Posterior vena cava (tissue), 2 donors: ENCODE measurements at regions of chr3 and their contacts with region 1.

Region 1: GRCh38 chr3:167728176-167728575 is 6.5 kb downstream of the PDCD10 start:
- DNase-seq: no peak

Region 2: DNA sequence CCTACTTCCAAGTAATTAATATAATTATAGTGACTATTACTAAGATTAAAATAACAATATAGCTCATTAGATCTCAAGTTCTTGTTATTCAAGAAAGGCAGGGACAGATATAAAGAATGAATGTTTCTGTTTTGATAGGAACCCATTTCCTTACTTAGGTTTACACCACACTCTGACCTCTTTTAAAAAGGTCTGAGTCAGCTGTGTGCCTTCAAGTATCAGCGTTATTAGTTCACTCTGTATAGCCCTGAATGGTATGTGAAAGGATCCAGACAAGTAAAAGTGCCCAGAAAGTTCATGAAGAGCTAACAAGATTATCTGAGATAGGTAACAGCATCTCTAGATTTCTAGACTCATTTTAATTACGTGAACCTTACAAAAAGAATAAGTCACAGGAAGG is 22.3 kb before region 1 on chr3:
- intact Hi-C with region 1: no loop called
- DNase-seq: no peak

Region 3: DNA sequence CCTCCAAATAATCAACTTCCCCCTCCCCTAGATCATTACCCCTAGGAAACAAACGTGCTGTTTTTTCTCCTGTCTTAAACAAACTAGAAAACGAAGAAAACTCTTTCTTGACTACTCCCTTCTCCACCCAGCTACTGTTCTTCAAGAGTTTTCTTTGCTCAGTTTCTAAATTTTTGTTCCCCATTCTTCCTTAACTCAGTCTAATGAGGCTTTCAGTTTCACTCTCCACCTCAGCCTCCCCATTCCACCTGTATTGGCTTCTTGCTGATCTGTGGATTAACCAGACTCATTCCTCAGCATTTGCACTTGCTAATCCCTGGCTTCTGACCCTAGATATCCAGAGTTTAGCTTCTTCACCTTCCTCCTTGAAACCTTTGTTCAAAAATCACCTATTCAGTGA is 34.1 kb after region 1 on chr3:
- intact Hi-C with region 1: loop called in 1 of 2 experiments (anchors 2 kb)
- DNase-seq: no peak